Mammary epithelial cell (primary cell): ENCODE measurements at regions of chr18 and their contacts with region 1.

Region 1: GRCh38 chr18:55234366-55235093 is 275.3 kb upstream of the CCDC68 start:
- DNase-seq: peak; percentile 70
- H3K4me3 ChIP-seq: no peak overlapping the region
- H3K27ac ChIP-seq: no peak overlapping the region
- H3K4me1 ChIP-seq: no peaks in the 10 kb centered on the region
- H3K27me3 ChIP-seq: no peaks in the 10 kb centered on the region
- CTCF ChIP-seq: peak; percentile 73 to 91

Region 2: DNA sequence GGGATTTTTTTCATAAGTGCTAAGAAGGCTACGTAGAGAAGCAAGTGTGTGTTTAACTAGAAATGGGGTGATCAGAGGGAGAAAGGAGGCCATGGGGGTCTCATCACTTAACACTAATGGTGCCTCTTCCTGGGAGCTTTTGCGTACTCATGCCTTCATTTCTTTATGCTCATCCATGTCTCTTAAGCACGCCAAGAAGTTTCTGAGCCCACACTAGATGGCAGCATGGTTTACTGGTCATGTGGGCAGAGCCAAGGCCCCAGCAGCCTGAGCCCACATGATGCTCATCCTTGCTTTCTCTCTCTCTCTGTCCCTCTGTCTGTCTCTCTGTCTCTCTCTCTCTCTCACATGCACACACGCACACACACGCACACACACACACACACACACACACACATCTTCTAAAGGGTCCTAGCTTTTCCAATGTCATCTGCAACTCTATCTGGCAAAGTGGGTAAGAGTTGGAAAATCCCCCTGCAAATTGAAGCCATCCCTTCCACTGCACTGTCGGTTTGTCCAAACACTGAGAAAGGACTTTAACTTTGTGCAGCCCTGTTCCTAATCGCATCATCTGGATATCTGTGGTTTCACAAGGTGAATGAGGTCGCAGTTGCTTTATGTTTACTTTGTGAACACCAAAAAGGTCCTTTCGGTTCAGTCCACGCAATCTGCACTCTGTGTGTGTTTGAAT is 138.1 kb before region 1 on chr18:
- CTCF ChIA-PET with region 1: interaction called, 3 read pairs
- dilution Hi-C with region 1: no loop called
- in situ Hi-C with region 1: no loop called
- intact Hi-C with region 1: loop called (anchors 1 kb)
- DNase-seq: peak; percentile 62
- H3K4me3 ChIP-seq: no peak overlapping the region
- H3K27ac ChIP-seq: no peak overlapping the region
- H3K4me1 ChIP-seq: peaks cover 13% of the 10 kb centered on the region
- H3K27me3 ChIP-seq: no peaks in the 10 kb centered on the region
- CTCF ChIP-seq: peak; percentile 35 to 70

Region 3: DNA sequence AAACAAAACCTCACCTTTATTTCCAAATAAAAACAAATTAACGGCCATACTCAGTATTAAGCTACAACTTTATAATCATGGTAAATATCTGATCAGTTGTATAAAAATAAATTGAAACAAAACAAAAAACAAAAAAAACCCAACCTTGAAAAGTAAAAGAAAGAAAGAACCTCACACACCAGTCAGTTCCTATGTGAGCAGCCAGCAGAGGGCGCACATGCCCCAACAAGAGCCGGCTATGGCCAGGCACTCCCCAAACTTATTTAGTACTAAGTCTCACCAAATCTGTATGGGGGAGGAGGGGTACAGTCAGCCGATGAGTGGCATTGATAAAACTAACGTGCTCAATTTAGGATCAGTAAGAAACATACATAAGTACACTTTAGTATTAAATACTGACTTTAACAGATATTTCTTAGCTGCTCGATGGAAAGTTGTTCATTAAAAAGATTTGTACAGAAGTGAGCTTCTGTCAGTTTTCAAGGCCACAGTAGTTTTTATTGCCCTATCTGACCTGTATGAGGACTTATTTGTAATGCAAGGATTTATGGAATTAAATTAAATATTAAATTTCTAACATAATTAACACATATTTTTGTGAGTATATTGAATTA is 180.8 kb after region 1 on chr18:
- CTCF ChIA-PET with region 1: no interaction called
- dilution Hi-C with region 1: no loop called
- in situ Hi-C with region 1: no loop called
- intact Hi-C with region 1: loop called (anchors 1 kb)
- DNase-seq: peak; percentile 43
- H3K4me3 ChIP-seq: no peak overlapping the region
- H3K27ac ChIP-seq: no peak overlapping the region
- H3K4me1 ChIP-seq: no peaks in the 10 kb centered on the region
- H3K27me3 ChIP-seq: no peaks in the 10 kb centered on the region
- CTCF ChIP-seq: peak; percentile 85 to 90

Region 4: DNA sequence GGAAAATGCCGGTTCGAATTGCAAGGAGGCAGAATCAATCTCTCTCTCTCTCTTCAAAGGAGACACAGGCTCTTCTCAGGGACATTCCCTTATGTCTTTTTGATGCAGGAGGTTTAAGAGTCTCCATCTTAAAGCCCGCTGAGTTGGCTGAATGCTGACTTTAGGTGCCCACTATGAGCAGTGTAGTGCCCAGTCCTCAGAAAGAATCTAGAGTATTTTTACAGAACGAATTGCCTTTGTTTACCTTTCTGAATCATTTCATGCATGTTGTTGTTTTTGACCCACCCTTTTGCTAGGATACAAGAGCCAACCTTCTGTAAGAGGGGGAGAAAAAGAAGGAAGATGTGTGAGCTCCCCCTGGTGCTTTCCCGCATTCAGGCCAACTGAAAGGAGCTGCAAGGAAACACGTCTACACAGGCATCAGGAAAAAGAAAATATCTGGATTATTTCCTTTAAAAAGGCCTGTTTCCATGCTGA is 547.0 kb after region 1 on chr18:
- CTCF ChIA-PET with region 1: interaction called, 25 read pairs
- dilution Hi-C with region 1: no loop called
- in situ Hi-C with region 1: loop called in 1 of 2 experiments (anchors 25 kb)
- intact Hi-C with region 1: loop called (anchors 1 kb)
- DNase-seq: peak; percentile 44
- H3K4me3 ChIP-seq: no peak overlapping the region
- H3K27ac ChIP-seq: no peak overlapping the region
- H3K4me1 ChIP-seq: peaks cover 14% of the 10 kb centered on the region
- H3K27me3 ChIP-seq: no peaks in the 10 kb centered on the region
- CTCF ChIP-seq: peak; percentile 67 to 85

Region 5: GRCh38 chr18:56563568-56563967 is 1329.0 kb after region 1 on chr18:
- CTCF ChIA-PET with region 1: no interaction called
- dilution Hi-C with region 1: no loop called
- in situ Hi-C with region 1: loop called in 1 of 2 experiments (anchors 25 kb)
- intact Hi-C with region 1: no loop called
- DNase-seq: no peak
- H3K4me3 ChIP-seq: no peak overlapping the region
- H3K27ac ChIP-seq: no peak overlapping the region
- H3K4me1 ChIP-seq: no peaks in the 10 kb centered on the region
- H3K27me3 ChIP-seq: no peaks in the 10 kb centered on the region
- CTCF ChIP-seq: peak in 1 of 2 donors; percentile 10